Activated CD4-positive, alpha-beta T cell treated with anti-CD3 and anti-CD28 coated beads, Interleukin-2, amount 10 ng/mL, durations not matched to agents 24 days and 14 days (primary cell): ENCODE measurements at regions of chr15 and their contacts with region 1.

Region 1: DNA sequence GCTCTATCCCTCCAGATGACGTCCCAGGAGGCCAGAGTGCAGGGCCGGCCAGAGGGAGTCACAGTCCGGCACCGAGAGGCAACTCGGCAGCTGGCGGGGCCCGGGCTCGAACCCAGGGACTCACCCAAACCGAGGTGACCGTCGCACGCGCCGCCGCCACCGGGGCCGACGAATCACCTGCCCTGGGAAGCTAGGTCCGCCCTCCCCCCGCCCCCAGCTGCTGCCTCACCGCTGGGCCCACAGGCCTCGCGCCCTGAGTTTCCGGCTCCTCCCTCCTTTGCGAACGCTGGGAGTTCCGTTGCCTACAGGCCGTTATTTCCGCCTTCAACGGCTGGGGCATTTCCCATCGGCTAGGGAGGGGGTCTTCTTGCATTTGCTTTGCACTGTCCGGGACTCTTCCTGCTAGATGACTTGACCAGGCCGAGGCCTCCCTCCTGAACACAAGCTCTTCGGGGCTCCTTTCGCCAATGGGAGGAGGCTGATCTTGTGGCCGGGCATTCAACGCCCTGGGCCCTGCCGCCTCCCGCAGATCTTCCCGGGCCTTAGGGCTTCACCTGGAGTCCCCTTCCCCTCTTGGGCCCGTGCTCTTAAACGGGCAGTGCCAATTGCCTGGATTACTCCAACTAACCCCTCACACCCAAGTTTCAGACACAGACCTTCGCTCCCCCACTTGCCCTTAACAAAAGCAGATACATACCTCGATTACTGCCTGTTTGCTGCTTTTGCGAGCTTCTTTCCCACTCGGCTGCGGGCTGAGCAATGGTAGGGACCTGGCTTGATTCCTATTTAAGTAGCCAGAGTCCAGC is at the start of gene SNUPN:
- DNase-seq: peak; percentile 97
- H3K4me3 Mint-ChIP-seq: peak within 1 kb of the TSS; percentile 93
- H3K27ac Mint-ChIP-seq: peak within 1 kb of the TSS; percentile 94
- H3K4me1 Mint-ChIP-seq: peaks cover 34% of the 10 kb centered on the region
- H3K27me3 Mint-ChIP-seq: no peaks in the 10 kb centered on the region
- total RNA-seq, gene SNUPN: 33.7 and 34.5 TPM in 2 replicates

Region 2: DNA sequence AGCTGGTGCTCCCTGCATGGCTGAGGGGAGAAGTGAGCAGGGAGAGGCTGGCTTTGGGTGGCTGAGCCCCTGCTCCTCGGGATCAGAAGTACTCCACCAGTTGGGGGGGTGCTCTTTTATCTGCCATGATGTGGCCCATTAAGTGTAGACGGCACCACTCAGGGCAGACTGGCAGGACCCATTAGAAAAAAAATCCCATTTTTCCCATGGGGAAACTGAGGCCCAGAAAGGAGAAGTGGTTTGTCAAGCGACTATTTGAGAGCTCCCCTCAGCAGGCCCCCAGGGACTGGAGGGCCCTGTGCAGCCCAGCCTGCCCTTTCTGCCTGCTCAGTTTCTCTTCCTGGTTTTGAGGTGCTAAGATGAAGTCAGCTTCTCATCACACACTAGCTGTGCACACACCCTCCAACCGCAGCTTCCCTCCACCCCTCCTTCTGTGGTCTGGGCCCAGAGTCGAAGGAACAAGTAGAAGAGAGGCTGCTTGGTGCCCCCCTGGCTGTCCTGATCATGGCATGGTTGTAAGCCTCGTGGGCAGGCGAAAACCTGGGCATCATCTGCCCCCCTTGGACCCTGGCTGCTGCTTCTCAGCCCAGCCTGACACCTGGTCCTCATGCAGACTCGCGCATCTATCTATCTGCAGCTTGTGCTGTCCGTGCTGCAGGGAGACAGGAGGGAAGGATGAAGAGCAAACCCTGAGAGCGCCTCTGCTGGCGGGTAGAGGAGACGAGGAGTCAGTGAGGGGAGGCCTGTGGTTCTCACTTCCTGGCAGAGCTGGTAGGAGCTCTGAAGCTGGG is 838.3 kb before region 1 on chr15:
- intact Hi-C with region 1: loop called (anchors 10 kb)
- DNase-seq: peak; percentile 97
- H3K4me3 Mint-ChIP-seq: peak overlapping the region; percentile 96
- H3K27ac Mint-ChIP-seq: peak overlapping the region; percentile 99
- H3K4me1 Mint-ChIP-seq: peaks cover 68% of the 10 kb centered on the region
- H3K27me3 Mint-ChIP-seq: no peaks in the 10 kb centered on the region

Region 3: DNA sequence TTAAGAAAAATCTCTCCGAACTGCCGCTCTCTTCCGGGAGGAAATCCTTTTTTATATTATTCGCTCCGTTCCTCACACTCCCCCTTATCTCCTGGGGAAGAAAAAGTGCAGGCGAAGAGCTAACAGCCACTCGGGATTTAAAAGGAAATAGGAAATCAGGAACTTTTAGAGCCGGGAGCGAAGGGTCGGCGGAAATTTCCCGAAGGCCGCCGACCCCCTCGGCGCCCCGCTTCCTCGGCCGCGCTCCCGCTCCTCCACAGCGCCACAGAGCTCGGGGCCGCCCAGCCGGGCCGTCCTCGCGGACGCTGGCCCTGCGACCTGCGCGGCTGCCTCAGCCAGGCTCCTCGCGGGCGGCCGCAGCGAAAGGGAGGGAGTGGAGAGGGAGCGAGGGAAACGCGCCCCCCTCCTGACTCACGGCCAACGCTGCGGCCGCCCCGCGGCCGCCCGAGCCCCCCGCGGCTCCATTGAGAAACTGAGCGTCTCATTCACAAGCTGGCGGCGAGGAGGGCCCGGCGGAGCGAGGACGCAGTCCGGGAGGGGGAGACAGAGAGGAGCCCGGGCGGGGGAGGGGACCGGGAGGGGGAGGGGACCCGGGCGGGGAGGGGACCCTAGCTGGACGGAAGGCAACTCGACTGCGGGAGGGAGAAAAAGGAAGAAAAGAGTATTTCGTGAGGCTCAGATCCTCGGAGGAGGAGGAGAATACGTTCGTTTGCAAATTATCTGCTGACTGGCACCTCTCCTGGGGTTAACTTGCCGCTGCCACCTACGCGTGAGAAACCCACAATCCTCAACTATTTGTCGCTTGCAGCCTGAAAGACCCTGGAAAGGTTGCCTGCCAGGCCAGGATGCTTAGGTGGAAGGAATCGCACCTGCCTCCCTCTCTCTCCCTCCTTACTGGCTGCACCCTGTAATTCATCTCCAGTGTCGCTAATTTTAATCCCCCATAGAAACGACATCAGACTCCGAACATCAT is 46.5 kb before region 1 on chr15 and contains the start of gene PTPN9:
- intact Hi-C with region 1: loop called (anchors 2 kb)
- DNase-seq: peak; percentile 90
- H3K4me3 Mint-ChIP-seq: peak within 1 kb of the TSS; percentile 88
- H3K27ac Mint-ChIP-seq: peak within 1 kb of the TSS; percentile 92
- H3K4me1 Mint-ChIP-seq: peaks cover 12% of the 10 kb centered on the region
- H3K27me3 Mint-ChIP-seq: no peaks in the 10 kb centered on the region
- total RNA-seq, gene PTPN9: 21.0 and 23.6 TPM in 2 replicates

Region 4: GRCh38 chr15:75606711-75607699 is 18.7 kb before region 1 on chr15:
- intact Hi-C with region 1: loop called (anchors 2 kb)
- DNase-seq: peak; percentile 78
- H3K4me3 Mint-ChIP-seq: peak overlapping the region; percentile 65
- H3K27ac Mint-ChIP-seq: peak overlapping the region; percentile 88
- H3K4me1 Mint-ChIP-seq: peaks cover 30% of the 10 kb centered on the region
- H3K27me3 Mint-ChIP-seq: no peaks in the 10 kb centered on the region